ENCODE measurements at regions of chr16 and their contacts with region 1.

Region 1: GRCh38 chr16:4649744-4650442 is 25.3 kb downstream of the MGRN1 start:
- DNase-seq: no peak
- ATAC-seq: no peak
- H3K4me3 Mint-ChIP-seq: no peak overlapping the region
- H3K27ac Mint-ChIP-seq: peak overlapping the region; percentile 57; the same call in 1 of the 2 replicates
- H3K4me1 Mint-ChIP-seq: no peaks in the 10 kb centered on the region
- H3K27me3 Mint-ChIP-seq: no peaks in the 10 kb centered on the region; the same call in 1 of the 2 replicates
- CTCF ChIP-seq: no peak

Region 2: GRCh38 chr16:4506450-4506849 is 143.4 kb before region 1 on chr16:
- CTCF ChIA-PET with region 1: interaction called, 12 read pairs
- POLR2A ChIA-PET with region 1: no interaction called
- DNase-seq: peak; percentile 51
- ATAC-seq: peak; percentile 88
- H3K4me3 Mint-ChIP-seq: no peak overlapping the region
- H3K27ac Mint-ChIP-seq: peak overlapping the region; percentile 13
- H3K4me1 Mint-ChIP-seq: peaks cover 6% of the 10 kb centered on the region; the same call in 1 of the 2 replicates
- H3K27me3 Mint-ChIP-seq: no peaks in the 10 kb centered on the region; the same call in 1 of the 2 replicates
- CTCF ChIP-seq: peak; percentile 88

Region 3: GRCh38 chr16:4616047-4616811 is 33.7 kb before region 1 on chr16:
- CTCF ChIA-PET with region 1: interaction called, 18 read pairs
- POLR2A ChIA-PET with region 1: interaction called, 4 read pairs
- DNase-seq: peak; percentile 99
- ATAC-seq: peak; percentile 81
- H3K4me3 Mint-ChIP-seq: peak overlapping the region; percentile 87
- H3K27ac Mint-ChIP-seq: peak overlapping the region; percentile 100
- H3K4me1 Mint-ChIP-seq: peaks cover 38% of the 10 kb centered on the region
- H3K27me3 Mint-ChIP-seq: no peaks in the 10 kb centered on the region
- CTCF ChIP-seq: no peak

Region 4: DNA sequence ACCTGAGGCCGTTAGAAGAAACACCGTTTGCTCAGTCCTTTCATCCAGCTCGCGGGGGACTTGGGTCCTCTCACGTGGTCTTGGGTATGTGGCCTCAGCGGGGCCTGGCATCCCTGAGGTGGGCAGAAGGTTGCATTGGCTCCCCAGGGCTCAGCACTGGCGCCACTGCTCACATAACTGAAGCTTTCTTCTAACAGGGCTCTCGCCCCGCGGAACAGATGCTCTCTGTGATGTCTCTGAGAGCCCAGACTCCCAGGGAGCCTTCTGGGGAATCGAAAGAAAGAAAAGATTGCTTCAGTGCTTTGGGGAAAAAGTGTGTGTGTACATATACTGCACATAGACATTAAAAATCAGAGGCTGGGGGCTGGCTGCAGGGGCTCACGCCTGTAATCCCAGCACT is 15.1 kb before region 1 on chr16:
- CTCF ChIA-PET with region 1: interaction called, 23 read pairs
- POLR2A ChIA-PET with region 1: no interaction called
- DNase-seq: no peak
- ATAC-seq: no peak
- H3K4me3 Mint-ChIP-seq: no peak overlapping the region
- H3K27ac Mint-ChIP-seq: peak overlapping the region; percentile 74; the same call in 1 of the 2 replicates
- H3K4me1 Mint-ChIP-seq: 0 out of 2 replicates have a peak, but pooled peaks cover 4% of the 10 kb centered on the region
- H3K27me3 Mint-ChIP-seq: no peaks in the 10 kb centered on the region
- CTCF ChIP-seq: no peak

Region 5: GRCh38 chr16:4675864-4676786 is 26.2 kb after region 1 on chr16:
- CTCF ChIA-PET with region 1: interaction called, 10 read pairs
- POLR2A ChIA-PET with region 1: no interaction called
- DNase-seq: no peak
- ATAC-seq: peak; percentile 64
- H3K4me3 Mint-ChIP-seq: no peak overlapping the region
- H3K27ac Mint-ChIP-seq: peak overlapping the region; percentile 49; the same call in 1 of the 2 replicates
- H3K4me1 Mint-ChIP-seq: peaks cover 3% of the 10 kb centered on the region; the same call in 1 of the 2 replicates
- H3K27me3 Mint-ChIP-seq: no peaks in the 10 kb centered on the region
- CTCF ChIP-seq: no peak

Region 6: DNA sequence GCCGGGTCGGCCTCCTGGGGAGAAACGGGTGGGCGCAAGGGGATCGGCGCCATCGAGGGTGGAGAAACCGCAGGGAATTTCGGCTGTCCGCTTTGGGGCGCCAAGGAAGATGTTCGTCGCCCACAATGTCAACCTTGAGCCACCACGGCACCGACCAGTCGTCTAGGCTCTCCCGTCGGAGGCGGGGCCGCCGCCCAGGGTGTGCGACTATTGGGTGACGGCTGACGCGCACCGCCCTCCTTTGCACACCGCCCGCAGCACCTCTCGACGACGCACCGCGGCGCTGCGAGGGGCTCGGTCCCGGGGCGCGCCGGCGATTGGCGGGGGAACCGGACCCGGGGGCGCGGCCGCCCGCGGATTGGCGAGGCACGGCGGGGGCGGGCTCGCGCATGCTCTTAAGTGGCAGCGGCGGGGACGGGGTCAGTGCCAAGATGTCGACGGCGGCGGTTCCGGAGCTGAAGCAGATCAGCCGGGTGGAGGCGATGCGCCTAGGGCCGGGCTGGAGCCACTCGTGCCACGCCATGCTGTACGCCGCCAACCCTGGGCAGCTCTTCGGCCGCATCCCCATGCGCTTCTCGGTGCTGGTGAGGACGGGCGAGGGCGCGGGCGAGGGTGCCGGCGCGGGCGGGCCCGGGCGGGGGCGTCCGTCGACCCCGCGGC is 43.5 kb after region 1 on chr16 and contains the start of gene NUDT16L1:
- CTCF ChIA-PET with region 1: interaction called, 14 read pairs
- POLR2A ChIA-PET with region 1: interaction called, 4 read pairs
- DNase-seq: peak; percentile 96
- ATAC-seq: peak; percentile 88
- H3K4me3 Mint-ChIP-seq: peak within 1 kb of the TSS; percentile 69
- H3K27ac Mint-ChIP-seq: peak within 1 kb of the TSS; percentile 19; the same call in 1 of the 2 replicates
- H3K4me1 Mint-ChIP-seq: no peaks in the 10 kb centered on the region
- H3K27me3 Mint-ChIP-seq: no peaks in the 10 kb centered on the region
- CTCF ChIP-seq: no peak
- total RNA-seq, gene NUDT16L1: 41.8 to 45.8 TPM (median 42.0 TPM) in 3 replicates

Region 7: GRCh38 chr16:4706871-4707270 is 57.0 kb after region 1 on chr16:
- CTCF ChIA-PET with region 1: no interaction called
- POLR2A ChIA-PET with region 1: no interaction called
- DNase-seq: no peak
- ATAC-seq: no peak
- H3K4me3 Mint-ChIP-seq: no peak overlapping the region
- H3K27ac Mint-ChIP-seq: peak overlapping the region; percentile 77
- H3K4me1 Mint-ChIP-seq: no peaks in the 10 kb centered on the region
- H3K27me3 Mint-ChIP-seq: no peaks in the 10 kb centered on the region
- CTCF ChIP-seq: no peak

Region 8: GRCh38 chr16:4726616-4727015 is 76.7 kb after region 1 on chr16:
- CTCF ChIA-PET with region 1: no interaction called
- POLR2A ChIA-PET with region 1: no interaction called
- DNase-seq: no peak
- ATAC-seq: no peak
- H3K4me3 Mint-ChIP-seq: no peak overlapping the region
- H3K27ac Mint-ChIP-seq: peak overlapping the region; percentile 50; the same call in 1 of the 2 replicates
- H3K4me1 Mint-ChIP-seq: no peaks in the 10 kb centered on the region
- H3K27me3 Mint-ChIP-seq: no peaks in the 10 kb centered on the region
- CTCF ChIP-seq: no peak

Region 9: GRCh38 chr16:4787627-4788482 is 138.0 kb after region 1 on chr16 and contains the start of gene SEPTIN12:
- CTCF ChIA-PET with region 1: no interaction called
- POLR2A ChIA-PET with region 1: no interaction called
- DNase-seq: no peak
- ATAC-seq: peak; percentile 52
- H3K4me3 Mint-ChIP-seq: no peak within 1 kb of the TSS
- H3K27ac Mint-ChIP-seq: no peak within 1 kb of the TSS; the same call in 1 of the 2 replicates
- H3K4me1 Mint-ChIP-seq: peaks cover 14% of the 10 kb centered on the region
- H3K27me3 Mint-ChIP-seq: no peaks in the 10 kb centered on the region; the same call in 1 of the 2 replicates
- CTCF ChIP-seq: no peak
- total RNA-seq, gene SEPTIN12: not detected in 3 replicates